IMR-90 (cell line): ENCODE measurements at regions of chr4 and their contacts with region 1.

Region 1: GRCh38 chr4:118289794-118290193 is 63.0 kb downstream of the PRSS12 start:
- DNase-seq: peak; percentile 92
- ATAC-seq: peak; percentile 57
- H3K4me3 ChIP-seq: no peak overlapping the region
- H3K27ac ChIP-seq: peak overlapping the region; percentile 73; the same call in 1 of the 2 replicates
- H3K4me1 ChIP-seq: peaks cover 19% of the 10 kb centered on the region
- H3K27me3 ChIP-seq: no peaks in the 10 kb centered on the region
- CTCF ChIP-seq: no peak
- POLR2A ChIP-seq: no peak
- RAD21 ChIP-seq: no peak

Region 2: DNA sequence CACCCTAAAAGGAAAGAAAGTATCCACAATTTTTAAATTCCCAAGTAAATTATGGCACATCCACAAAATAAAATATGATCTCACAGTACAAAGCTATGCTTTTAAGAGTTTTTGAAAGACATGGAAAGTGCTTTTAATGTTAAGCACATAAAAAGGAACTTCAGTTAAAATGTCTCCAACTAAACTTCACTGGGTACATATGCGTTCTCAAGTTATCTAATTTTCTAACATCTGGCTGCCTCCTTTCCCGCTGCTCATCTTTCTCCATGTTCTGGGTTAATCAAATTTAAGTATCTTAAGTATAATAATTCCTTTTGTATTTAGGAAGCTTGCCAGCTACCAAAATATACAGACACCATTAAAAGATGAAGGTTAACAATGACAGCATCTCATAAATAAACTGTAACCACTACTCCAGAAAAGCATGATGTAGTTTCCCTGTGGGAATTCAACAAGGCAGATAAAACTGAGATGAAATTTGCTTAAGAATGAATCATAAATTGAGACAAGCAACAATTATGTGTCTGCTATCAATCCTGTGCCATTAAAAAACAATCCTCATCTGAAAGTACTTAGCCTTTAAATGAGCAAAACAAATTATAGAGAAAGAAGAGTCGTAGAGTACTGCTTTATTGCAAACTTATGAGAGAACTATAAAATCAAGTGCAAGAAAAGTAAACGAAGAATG is 37.9 kb after region 1 on chr4:
- CTCF ChIA-PET with region 1: no interaction called
- POLR2A ChIA-PET with region 1: no interaction called
- dilution Hi-C with region 1: no loop called
- in situ Hi-C with region 1: loop called (anchors 5 kb)
- intact Hi-C with region 1: no loop called
- DNase-seq: peak; percentile 59
- ATAC-seq: peak; percentile 56
- H3K4me3 ChIP-seq: no peak overlapping the region
- H3K27ac ChIP-seq: no peak overlapping the region
- H3K4me1 ChIP-seq: peaks cover 2% of the 10 kb centered on the region; the same call in 1 of the 2 replicates
- H3K27me3 ChIP-seq: no peaks in the 10 kb centered on the region
- CTCF ChIP-seq: no peak
- POLR2A ChIP-seq: no peak
- RAD21 ChIP-seq: no peak

Region 3: DNA sequence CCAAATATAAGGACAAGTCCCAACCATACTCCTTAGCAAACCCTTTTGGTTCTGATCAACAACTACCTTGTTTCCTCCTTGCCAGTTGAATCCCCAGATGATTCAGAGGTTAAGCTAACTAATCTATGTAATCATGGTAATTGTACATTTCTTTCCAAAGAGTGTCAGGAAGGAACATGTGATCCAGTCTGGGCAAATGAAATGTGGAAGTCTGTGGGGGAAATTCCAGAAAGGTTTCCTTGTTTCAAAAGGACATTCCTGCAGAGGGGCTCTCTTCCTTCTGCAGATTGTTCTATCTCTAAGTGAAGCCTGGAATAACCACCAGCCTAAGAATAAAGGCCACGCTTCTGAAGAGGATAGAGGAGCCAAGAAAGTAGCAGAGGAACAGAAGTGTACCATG is 56.0 kb after region 1 on chr4:
- CTCF ChIA-PET with region 1: no interaction called
- POLR2A ChIA-PET with region 1: interaction called, 4 read pairs
- dilution Hi-C with region 1: no loop called
- in situ Hi-C with region 1: no loop called
- intact Hi-C with region 1: loop called (anchors 2 kb)
- DNase-seq: peak; percentile 46
- ATAC-seq: peak; percentile 16; the same call in 1 of the 2 replicates
- H3K4me3 ChIP-seq: no peak overlapping the region
- H3K27ac ChIP-seq: peak overlapping the region; percentile 47; the same call in 1 of the 2 replicates
- H3K4me1 ChIP-seq: peaks cover 16% of the 10 kb centered on the region
- H3K27me3 ChIP-seq: no peaks in the 10 kb centered on the region
- CTCF ChIP-seq: no peak
- POLR2A ChIP-seq: no peak
- RAD21 ChIP-seq: no peak